Transverse colon (tissue), 4 donors: ENCODE measurements at regions of chr7 and their contacts with region 1.

Region 1: DNA sequence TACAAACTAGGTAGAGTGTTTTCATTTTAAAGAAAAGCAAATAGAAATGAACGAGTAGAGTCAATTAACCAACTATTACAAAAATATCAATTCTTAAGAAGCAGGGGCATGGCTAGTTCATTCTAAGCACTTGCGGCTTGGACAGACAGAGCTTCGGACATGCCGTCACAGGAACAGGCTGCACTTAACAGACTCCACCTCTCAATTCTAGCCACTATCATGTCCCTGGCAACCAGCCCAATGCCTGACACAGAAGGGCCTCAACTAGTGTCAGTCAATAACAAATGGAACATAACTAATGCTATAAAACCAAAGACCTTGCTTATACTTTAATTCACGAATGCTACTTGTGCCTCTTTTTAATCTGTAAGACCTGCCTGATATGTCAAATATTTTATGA is 74.4 kb downstream of the TPK1 start:
- DNase-seq: no peak
- H3K4me3 ChIP-seq: no peak overlapping the region
- H3K27ac ChIP-seq: no peak overlapping the region
- H3K4me1 ChIP-seq: no peaks in the 10 kb centered on the region
- H3K27me3 ChIP-seq: no peaks in the 10 kb centered on the region
- CTCF ChIP-seq: no peak
- EP300 ChIP-seq: no peak
- POLR2A ChIP-seq: no peak

Region 2: GRCh38 chr7:145212050-145212449 is 450.6 kb after region 1 on chr7:
- in situ Hi-C with region 1: no loop called
- intact Hi-C with region 1: loop called (anchors 10 kb)
- DNase-seq: no peak
- H3K4me3 ChIP-seq: no peak overlapping the region
- H3K27ac ChIP-seq: no peak overlapping the region
- H3K4me1 ChIP-seq: no peaks in the 10 kb centered on the region
- H3K27me3 ChIP-seq: no peaks in the 10 kb centered on the region
- CTCF ChIP-seq: no peak
- EP300 ChIP-seq: no peak
- POLR2A ChIP-seq: no peak